ENCODE measurements at regions of chr19 and their contacts with region 1.

Region 1: GRCh38 chr19:10936661-10937084 is 8.1 kb downstream of the TIMM29 start:
- DNase-seq: peak; percentile 42
- H3K4me3 ChIP-seq: no peak overlapping the region
- H3K27me3 ChIP-seq: no peaks in the 10 kb centered on the region
- CTCF ChIP-seq: peak; percentile 65

Region 2: DNA sequence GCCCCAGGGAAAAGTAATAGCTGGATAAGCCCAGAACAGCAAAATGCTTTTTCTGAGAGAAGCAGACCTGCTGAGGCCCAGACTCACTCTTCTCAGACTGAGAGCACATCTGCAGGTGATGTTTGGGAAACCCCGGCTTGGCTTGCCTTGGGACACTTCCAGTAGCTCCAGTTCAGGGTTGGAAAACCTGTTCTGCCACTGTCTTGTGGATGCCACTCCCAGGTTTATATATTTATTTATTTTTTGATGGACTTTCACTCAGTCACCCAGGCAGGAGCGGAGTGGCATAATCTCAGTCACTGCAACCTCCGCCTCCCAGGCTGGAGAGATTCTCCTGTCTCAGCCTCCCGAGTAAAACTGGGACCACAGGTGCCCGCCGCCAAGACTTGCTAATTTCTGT is 16.1 kb after region 1 on chr19:
- CTCF ChIA-PET with region 1: interaction called, 22 read pairs
- POLR2A ChIA-PET with region 1: interaction called, 3 read pairs
- DNase-seq: no peak
- H3K4me3 ChIP-seq: no peak overlapping the region
- H3K27me3 ChIP-seq: no peaks in the 10 kb centered on the region
- CTCF ChIP-seq: no peak

Region 3: DNA sequence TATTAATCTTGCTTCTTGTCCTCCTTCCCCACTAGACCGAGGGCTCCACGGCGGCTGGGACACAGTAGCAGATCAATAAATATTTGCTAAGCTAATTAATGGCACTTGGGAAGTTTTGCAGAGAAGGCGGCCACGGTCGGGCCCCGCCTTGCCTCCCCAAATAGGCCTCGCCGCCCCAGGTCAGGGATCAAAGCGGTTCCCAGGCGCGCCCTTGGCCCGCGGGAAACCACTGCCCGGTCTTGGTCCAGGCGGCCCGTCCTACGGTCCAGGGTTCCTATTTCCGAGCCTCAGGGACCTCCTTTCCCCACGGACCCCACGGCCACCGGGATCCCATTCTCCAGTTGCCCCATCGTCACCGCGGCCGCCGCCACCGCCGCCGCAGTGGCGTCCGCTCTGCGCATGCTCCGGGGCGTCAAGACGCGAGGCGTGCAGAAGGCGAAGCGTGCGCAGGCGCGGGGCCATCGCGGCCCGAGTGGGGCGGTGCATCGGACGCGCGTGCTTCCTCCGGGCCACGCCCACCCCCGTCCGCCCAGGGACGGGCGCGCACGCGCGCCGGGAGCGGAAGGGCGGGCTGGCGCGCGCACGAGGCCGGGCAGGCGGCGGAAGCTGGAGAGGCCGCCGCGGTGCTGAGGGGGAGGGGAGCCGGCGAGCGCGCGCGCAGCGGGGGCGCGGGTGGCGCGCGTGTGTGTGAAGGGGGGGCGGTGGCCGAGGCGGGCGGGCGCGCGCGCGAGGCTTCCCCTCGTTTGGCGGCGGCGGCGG is 23.8 kb after region 1 on chr19 and contains the start of gene SMARCA4:
- CTCF ChIA-PET with region 1: interaction called, 24 read pairs
- POLR2A ChIA-PET with region 1: interaction called, 10 read pairs
- DNase-seq: peak; percentile 77
- H3K4me3 ChIP-seq: peak within 1 kb of the TSS; percentile 83
- H3K27me3 ChIP-seq: no peaks in the 10 kb centered on the region
- CTCF ChIP-seq: no peak
- polyA plus RNA-seq, gene SMARCA4: 25.2 and 46.3 TPM in 2 replicates

Region 4: DNA sequence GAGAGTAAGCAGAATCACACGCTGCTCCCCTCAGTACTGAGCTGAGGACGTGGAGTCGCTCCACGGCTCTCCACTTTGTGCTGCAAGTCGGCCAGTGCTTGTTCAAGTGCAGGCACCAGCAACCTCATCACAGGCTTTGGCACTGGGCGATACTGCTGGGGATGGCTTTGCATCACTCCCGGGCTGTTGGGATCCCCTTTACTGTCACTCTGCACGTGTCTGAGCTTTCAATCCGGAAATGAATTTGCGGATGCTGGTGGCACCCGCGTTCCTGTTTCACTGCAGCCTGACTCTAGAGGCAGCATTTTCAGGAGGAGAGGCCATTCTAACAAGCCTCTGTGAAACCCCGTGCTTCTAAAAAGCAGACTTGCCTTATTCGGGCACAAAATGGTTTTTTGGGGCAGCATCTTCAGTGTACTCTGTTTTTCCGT is 43.3 kb after region 1 on chr19:
- CTCF ChIA-PET with region 1: interaction called, 11 read pairs
- POLR2A ChIA-PET with region 1: no interaction called
- DNase-seq: no peak
- H3K4me3 ChIP-seq: no peak overlapping the region
- H3K27me3 ChIP-seq: no peaks in the 10 kb centered on the region
- CTCF ChIP-seq: no peak